Activated CD4-positive, alpha-beta T cell treated with anti-CD3 and anti-CD28 coated beads for 36 hours (primary cell): ENCODE measurements at regions of chr12 and their contacts with region 1.

Region 1: DNA sequence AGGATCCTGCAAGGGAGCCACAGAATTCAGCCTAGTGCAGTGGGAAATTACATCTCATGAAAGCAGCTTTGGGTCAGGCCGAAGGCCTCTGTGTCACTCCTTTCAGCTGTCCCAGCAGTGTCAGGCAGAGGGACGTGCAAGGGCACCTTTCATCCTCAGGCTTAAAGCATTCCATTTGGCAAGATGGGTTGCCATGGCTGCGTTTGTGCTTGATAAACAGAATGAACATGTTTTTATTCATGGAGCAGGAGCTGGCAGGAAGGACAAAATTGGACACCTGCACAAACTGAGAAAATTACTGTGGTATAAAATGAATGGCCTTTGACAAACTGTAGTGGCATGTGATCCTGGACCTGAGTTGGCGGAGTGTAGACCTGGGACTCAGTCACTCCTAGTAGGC is 29.4 kb downstream of the ACAD10 start:
- DNase-seq: no peak
- ATAC-seq: no peak
- H3K4me3 Mint-ChIP-seq: no peak overlapping the region
- H3K27ac Mint-ChIP-seq: no peak overlapping the region
- H3K4me1 Mint-ChIP-seq: no peaks in the 10 kb centered on the region
- H3K27me3 Mint-ChIP-seq: no peaks in the 10 kb centered on the region

Region 2: GRCh38 chr12:111434680-111435338 is 280.5 kb before region 1 on chr12:
- CTCF ChIA-PET with region 1: no interaction called
- POLR2A ChIA-PET with region 1: no interaction called
- intact Hi-C with region 1: no loop called
- DNase-seq: peak; percentile 88
- ATAC-seq: peak; percentile 80
- H3K4me3 Mint-ChIP-seq: peak overlapping the region; percentile 35
- H3K27ac Mint-ChIP-seq: peak overlapping the region; percentile 81
- H3K4me1 Mint-ChIP-seq: peaks cover 89% of the 10 kb centered on the region
- H3K27me3 Mint-ChIP-seq: no peaks in the 10 kb centered on the region

Region 3: GRCh38 chr12:111570084-111570961 is 145.0 kb before region 1 on chr12:
- CTCF ChIA-PET with region 1: no interaction called
- POLR2A ChIA-PET with region 1: no interaction called
- intact Hi-C with region 1: no loop called
- DNase-seq: no peak
- ATAC-seq: no peak
- H3K4me3 Mint-ChIP-seq: no peak overlapping the region
- H3K27ac Mint-ChIP-seq: no peak overlapping the region
- H3K4me1 Mint-ChIP-seq: peaks cover 12% of the 10 kb centered on the region
- H3K27me3 Mint-ChIP-seq: no peaks in the 10 kb centered on the region

Region 4: DNA sequence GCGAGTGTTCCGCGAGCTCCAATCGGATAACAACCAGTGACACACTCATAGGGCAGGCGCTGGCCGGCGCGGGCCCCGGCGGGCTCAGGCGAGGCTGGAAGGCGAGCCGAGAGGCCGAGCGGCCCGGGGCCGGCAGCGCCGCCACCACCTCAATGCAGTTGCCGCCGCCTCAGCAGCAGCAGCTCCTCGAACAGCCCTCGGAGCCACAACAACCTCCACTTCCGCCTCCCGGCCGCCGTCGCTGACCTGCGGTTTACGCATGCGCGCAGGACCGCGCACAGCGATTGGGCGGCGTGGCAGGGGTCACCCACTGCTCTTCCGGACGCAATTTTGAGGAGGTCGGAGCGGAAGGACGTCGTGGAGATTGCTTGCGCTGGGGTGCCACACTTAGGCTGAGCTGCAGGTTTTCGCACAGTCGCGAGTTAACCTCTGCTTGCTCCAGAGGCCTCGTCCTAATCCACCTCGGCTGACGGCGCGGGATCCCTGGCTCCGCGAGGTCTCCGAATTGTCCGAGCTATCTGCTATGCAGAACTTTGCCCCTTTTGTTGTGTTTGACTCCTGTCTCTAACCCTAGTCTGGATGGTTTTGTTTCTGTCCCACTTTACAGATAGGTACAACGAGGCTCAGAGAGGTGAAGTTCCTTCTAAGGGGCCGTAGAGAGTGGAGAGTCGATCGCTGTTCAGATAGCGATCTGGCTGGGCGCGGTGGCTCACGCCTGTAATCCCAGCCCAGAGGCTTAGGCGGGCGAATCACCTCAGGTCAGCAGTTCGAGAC is 29.3 kb before region 1 on chr12 and contains the starts of genes ACAD10 and BRAP:
- CTCF ChIA-PET with region 1: no interaction called
- POLR2A ChIA-PET with region 1: interaction called, 13 read pairs
- intact Hi-C with region 1: no loop called
- DNase-seq: peak; percentile 95
- ATAC-seq: peak; percentile 97
- H3K4me3 Mint-ChIP-seq: peak within 1 kb of the TSS; percentile 89
- H3K27ac Mint-ChIP-seq: peak within 1 kb of the TSS; percentile 91
- H3K4me1 Mint-ChIP-seq: peaks cover 31% of the 10 kb centered on the region
- H3K27me3 Mint-ChIP-seq: no peaks in the 10 kb centered on the region
- total RNA-seq, gene ACAD10: 25.5 to 27.5 TPM
- total RNA-seq, gene BRAP: 18.3 to 23.6 TPM